GM12878 (cell line): ENCODE measurements at regions of chr10 and their contacts with region 1.

Region 1: GRCh38 chr10:69004821-69005220 is 16.2 kb downstream of the KIFBP start:
- DNase-seq: no peak
- ATAC-seq: peak; percentile 85
- H3K4me3 ChIP-seq: no peak overlapping the region
- H3K27ac ChIP-seq: no peak overlapping the region
- H3K4me1 ChIP-seq: no peaks in the 10 kb centered on the region
- H3K27me3 ChIP-seq: no peaks in the 10 kb centered on the region
- CTCF ChIP-seq: peak; percentile 51 to 69 (median 56); a peak in 5 of 6 replicates
- EP300 ChIP-seq: no peak
- POLR2A ChIP-seq: no peak
- RAD21 ChIP-seq: peak; percentile 94

Region 2: GRCh38 chr10:68423522-68423921 is 581.3 kb before region 1 on chr10:
- CTCF ChIA-PET with region 1: no interaction called
- POLR2A ChIA-PET with region 1: no interaction called
- RAD21 ChIA-PET with region 1: no interaction called
- SMC1A ChIA-PET with region 1: no interaction called
- in situ Hi-C with region 1: no loop called
- intact Hi-C with region 1: no loop called
- DNase-seq: no peak
- ATAC-seq: no peak
- H3K4me3 ChIP-seq: no peak overlapping the region
- H3K27ac ChIP-seq: no peak overlapping the region
- H3K4me1 ChIP-seq: no peaks in the 10 kb centered on the region
- H3K27me3 ChIP-seq: no peaks in the 10 kb centered on the region
- CTCF ChIP-seq: no peak
- EP300 ChIP-seq: no peak
- POLR2A ChIP-seq: no peak
- RAD21 ChIP-seq: no peak

Region 3: DNA sequence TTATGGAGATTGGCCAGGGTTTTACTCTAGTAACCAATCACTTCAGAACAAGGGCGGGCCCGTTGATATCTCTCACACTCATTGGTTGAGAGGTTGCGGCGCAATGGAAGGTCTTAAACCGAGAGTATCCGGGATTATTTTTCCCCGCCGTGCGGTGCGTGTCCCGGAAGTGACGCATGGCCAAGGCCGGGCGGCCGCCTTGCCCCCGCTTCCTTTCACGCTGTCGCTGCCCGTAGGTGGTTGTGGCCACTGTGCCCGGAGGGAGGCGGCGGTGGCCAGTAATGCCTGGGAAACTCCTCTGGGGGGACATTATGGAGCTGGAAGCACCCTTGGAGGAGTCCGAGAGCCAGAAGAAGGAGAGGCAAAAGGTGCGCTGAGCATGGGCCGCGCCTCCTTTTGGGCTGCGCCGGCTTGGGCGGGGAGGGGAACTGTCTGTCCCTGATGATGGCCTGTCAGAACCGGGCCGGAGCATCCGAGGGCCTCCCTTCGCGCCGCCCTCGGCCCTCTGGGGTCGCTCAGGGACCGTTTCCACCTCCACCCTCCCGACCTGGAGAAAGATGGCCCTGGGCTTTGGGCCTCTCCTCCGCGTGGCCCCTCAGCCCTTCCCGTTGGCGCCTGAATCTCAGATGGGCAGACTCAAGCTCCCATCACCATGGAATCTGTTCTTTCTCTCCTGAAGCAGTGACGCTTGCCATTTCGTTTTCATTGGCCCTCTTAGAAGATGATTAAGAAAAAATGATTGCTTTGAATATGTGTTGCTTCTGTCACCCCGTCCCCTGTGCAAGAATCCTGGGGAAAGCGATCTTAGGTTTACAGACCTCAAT is 103.5 kb before region 1 on chr10 and contains the start of gene DDX50:
- CTCF ChIA-PET with region 1: no interaction called
- POLR2A ChIA-PET with region 1: no interaction called
- RAD21 ChIA-PET with region 1: no interaction called
- SMC1A ChIA-PET with region 1: no interaction called
- in situ Hi-C with region 1: no loop called
- intact Hi-C with region 1: no loop called
- DNase-seq: peak; percentile 97
- ATAC-seq: peak; percentile 98
- H3K4me3 ChIP-seq: peak within 1 kb of the TSS; percentile 69
- H3K27ac ChIP-seq: peak within 1 kb of the TSS; percentile 95
- H3K4me1 ChIP-seq: peaks cover 3% of the 10 kb centered on the region; the same call in 1 of the 2 replicates
- H3K27me3 ChIP-seq: no peaks in the 10 kb centered on the region
- CTCF ChIP-seq: 0 out of 6 replicates have a peak, but pooled peaks of 2 of the 3 experiments have one; percentile 2 to 6
- EP300 ChIP-seq: no peak
- POLR2A ChIP-seq: peak; percentile 91
- RAD21 ChIP-seq: no peak
- polyA plus RNA-seq, gene DDX50: 24.9 to 32.0 TPM

Region 4: GRCh38 chr10:68988530-68989316 is 16.1 kb before region 1 on chr10 and contains the start of gene KIFBP:
- CTCF ChIA-PET with region 1: interaction called, 16 read pairs
- POLR2A ChIA-PET with region 1: no interaction called
- RAD21 ChIA-PET with region 1: interaction called, 8 read pairs
- SMC1A ChIA-PET with region 1: interaction called, 6 read pairs
- in situ Hi-C with region 1: no loop called
- intact Hi-C with region 1: no loop called
- DNase-seq: peak; percentile 89
- ATAC-seq: peak; percentile 86
- H3K4me3 ChIP-seq: peak within 1 kb of the TSS; percentile 86
- H3K27ac ChIP-seq: peak within 1 kb of the TSS; percentile 70
- H3K4me1 ChIP-seq: peaks cover 7% of the 10 kb centered on the region
- H3K27me3 ChIP-seq: no peaks in the 10 kb centered on the region
- CTCF ChIP-seq: peak; percentile 44 to 60 (median 47); a peak in 5 of 6 replicates
- EP300 ChIP-seq: 0 out of 4 replicates have a peak, but pooled peaks of 1 of the 2 experiments have one; percentile 24
- POLR2A ChIP-seq: peak; percentile 86
- RAD21 ChIP-seq: peak; percentile 20; the same call in 1 of the 2 replicates
- polyA plus RNA-seq, gene KIFBP: 8.6 to 10.0 TPM

Region 5: GRCh38 chr10:69051303-69051702 is 46.5 kb after region 1 on chr10:
- CTCF ChIA-PET with region 1: interaction called, 36 read pairs
- POLR2A ChIA-PET with region 1: interaction called, 13 read pairs
- RAD21 ChIA-PET with region 1: interaction called, 19 read pairs
- SMC1A ChIA-PET with region 1: interaction called, 30 read pairs
- in situ Hi-C with region 1: no loop called
- intact Hi-C with region 1: loop called (anchors 5 kb)
- DNase-seq: no peak
- ATAC-seq: peak; percentile 64
- H3K4me3 ChIP-seq: no peak overlapping the region
- H3K27ac ChIP-seq: peak overlapping the region; percentile 85
- H3K4me1 ChIP-seq: peaks cover 89% of the 10 kb centered on the region
- H3K27me3 ChIP-seq: no peaks in the 10 kb centered on the region
- CTCF ChIP-seq: no peak
- EP300 ChIP-seq: peak in 1 of 2 experiments; percentile 87; a peak in 1 of 4 replicates
- POLR2A ChIP-seq: no peak
- RAD21 ChIP-seq: no peak

Region 6: DNA sequence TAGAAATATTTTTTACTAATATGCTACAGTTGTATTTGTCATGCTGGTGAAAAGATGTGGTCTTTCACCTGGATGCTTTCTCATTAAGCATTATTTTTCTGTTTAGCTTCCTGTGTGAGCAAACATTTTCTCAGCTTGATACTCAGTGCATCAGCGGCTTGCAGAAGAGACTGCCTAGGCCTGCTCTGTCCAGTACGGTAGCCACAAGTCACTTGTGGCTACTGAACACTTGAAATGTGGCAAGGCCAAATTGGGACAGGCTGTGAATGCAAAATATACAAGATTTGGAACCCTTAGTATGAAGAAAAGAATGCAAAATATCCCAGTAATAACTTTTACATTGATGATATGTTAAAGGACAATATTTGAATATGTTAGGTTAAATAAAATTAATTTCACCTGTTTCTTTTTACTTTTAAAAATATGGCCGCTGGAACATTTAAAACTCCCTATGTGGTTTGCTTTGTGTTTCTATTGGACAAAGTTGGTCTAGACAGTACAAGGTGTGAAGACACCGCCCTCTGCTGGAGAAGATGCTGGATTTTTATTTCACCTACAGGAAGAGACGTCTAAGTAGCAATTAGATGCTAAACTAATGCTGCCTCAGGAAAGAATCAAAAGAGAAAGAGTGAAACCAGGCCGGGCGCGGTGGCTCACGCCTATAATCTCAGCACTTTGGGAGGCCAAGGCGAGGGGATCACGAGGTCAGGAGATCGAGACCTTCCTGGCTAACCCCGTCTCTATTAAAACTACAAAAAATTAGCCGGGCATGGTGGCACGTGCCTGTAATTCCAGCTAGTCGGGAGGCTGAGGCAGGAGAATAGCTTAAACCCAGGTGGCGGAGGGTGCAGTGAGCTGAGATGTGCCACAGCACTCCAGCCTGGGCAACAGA is 88.4 kb after region 1 on chr10:
- CTCF ChIA-PET with region 1: interaction called, 272 read pairs
- POLR2A ChIA-PET with region 1: interaction called, 25 read pairs
- RAD21 ChIA-PET with region 1: interaction called, 252 read pairs
- SMC1A ChIA-PET with region 1: interaction called, 269 read pairs
- in situ Hi-C with region 1: loop called (anchors 10 kb)
- intact Hi-C with region 1: loop called (anchors 1 kb)
- DNase-seq: peak; percentile 69
- ATAC-seq: peak; percentile 43
- H3K4me3 ChIP-seq: peak overlapping the region; percentile 72
- H3K27ac ChIP-seq: peak overlapping the region; percentile 97
- H3K4me1 ChIP-seq: no peaks in the 10 kb centered on the region
- H3K27me3 ChIP-seq: no peaks in the 10 kb centered on the region
- CTCF ChIP-seq: peak; percentile 53 to 68 (median 60); a peak in 5 of 6 replicates
- EP300 ChIP-seq: no peak
- POLR2A ChIP-seq: no peak
- RAD21 ChIP-seq: peak; percentile 94

Region 7: GRCh38 chr10:69123747-69124562 is 119.1 kb after region 1 on chr10 and contains the start of gene VPS26A:
- CTCF ChIA-PET with region 1: interaction called, 46 read pairs
- POLR2A ChIA-PET with region 1: interaction called, 7 read pairs
- RAD21 ChIA-PET with region 1: interaction called, 31 read pairs
- SMC1A ChIA-PET with region 1: interaction called, 37 read pairs
- in situ Hi-C with region 1: no loop called
- intact Hi-C with region 1: loop called (anchors 1 kb)
- DNase-seq: peak; percentile 87
- ATAC-seq: peak; percentile 93
- H3K4me3 ChIP-seq: peak within 1 kb of the TSS; percentile 88
- H3K27ac ChIP-seq: peak within 1 kb of the TSS; percentile 86
- H3K4me1 ChIP-seq: peaks cover 4% of the 10 kb centered on the region; the same call in 1 of the 2 replicates
- H3K27me3 ChIP-seq: no peaks in the 10 kb centered on the region
- CTCF ChIP-seq: peak; percentile 58 to 78 (median 60); a peak in 5 of 6 replicates
- EP300 ChIP-seq: no peak
- POLR2A ChIP-seq: peak; percentile 88
- RAD21 ChIP-seq: 0 out of 2 replicates have a peak, but pooled peaks have one; percentile 3
- polyA plus RNA-seq, gene VPS26A: 21.3 to 30.9 TPM

Region 8: GRCh38 chr10:69202332-69202731 is 197.5 kb after region 1 on chr10:
- CTCF ChIA-PET with region 1: interaction called, 14 read pairs
- POLR2A ChIA-PET with region 1: interaction called, 4 read pairs
- RAD21 ChIA-PET with region 1: interaction called, 4 read pairs
- SMC1A ChIA-PET with region 1: interaction called, 5 read pairs
- in situ Hi-C with region 1: no loop called
- intact Hi-C with region 1: no loop called
- DNase-seq: peak; percentile 39
- ATAC-seq: peak; percentile 89
- H3K4me3 ChIP-seq: no peak overlapping the region
- H3K27ac ChIP-seq: peak overlapping the region; percentile 8; the same call in 1 of the 2 replicates
- H3K4me1 ChIP-seq: no peaks in the 10 kb centered on the region
- H3K27me3 ChIP-seq: no peaks in the 10 kb centered on the region
- CTCF ChIP-seq: no peak
- EP300 ChIP-seq: peak in 1 of 2 experiments; percentile 81; a peak in 2 of 4 replicates
- POLR2A ChIP-seq: no peak
- RAD21 ChIP-seq: no peak

Region 9: GRCh38 chr10:69392481-69393000 is 387.7 kb after region 1 on chr10:
- CTCF ChIA-PET with region 1: interaction called, 8 read pairs
- POLR2A ChIA-PET with region 1: interaction called, 7 read pairs
- RAD21 ChIA-PET with region 1: interaction called, 16 read pairs
- SMC1A ChIA-PET with region 1: interaction called, 8 read pairs
- in situ Hi-C with region 1: no loop called
- intact Hi-C with region 1: no loop called
- DNase-seq: peak; percentile 51
- ATAC-seq: peak; percentile 100
- H3K4me3 ChIP-seq: no peak overlapping the region
- H3K27ac ChIP-seq: no peak overlapping the region
- H3K4me1 ChIP-seq: no peaks in the 10 kb centered on the region
- H3K27me3 ChIP-seq: no peaks in the 10 kb centered on the region
- CTCF ChIP-seq: peak; percentile 96 to 99 (median 98); a peak in 5 of 6 replicates
- EP300 ChIP-seq: no peak
- POLR2A ChIP-seq: no peak
- RAD21 ChIP-seq: peak; percentile 97